ENCODE measurements at regions of chr3 and their contacts with region 1.

Region 1: GRCh38 chr3:188031121-188031520 is 122.8 kb upstream of the LPP start:
- DNase-seq: peak; percentile 58
- H3K4me3 ChIP-seq: no peak overlapping the region
- H3K27ac ChIP-seq: peak overlapping the region; percentile 36
- H3K4me1 ChIP-seq: peaks cover 33% of the 10 kb centered on the region
- CTCF ChIP-seq: peak; percentile 39; the same call in 1 of the 2 replicates

Region 2: DNA sequence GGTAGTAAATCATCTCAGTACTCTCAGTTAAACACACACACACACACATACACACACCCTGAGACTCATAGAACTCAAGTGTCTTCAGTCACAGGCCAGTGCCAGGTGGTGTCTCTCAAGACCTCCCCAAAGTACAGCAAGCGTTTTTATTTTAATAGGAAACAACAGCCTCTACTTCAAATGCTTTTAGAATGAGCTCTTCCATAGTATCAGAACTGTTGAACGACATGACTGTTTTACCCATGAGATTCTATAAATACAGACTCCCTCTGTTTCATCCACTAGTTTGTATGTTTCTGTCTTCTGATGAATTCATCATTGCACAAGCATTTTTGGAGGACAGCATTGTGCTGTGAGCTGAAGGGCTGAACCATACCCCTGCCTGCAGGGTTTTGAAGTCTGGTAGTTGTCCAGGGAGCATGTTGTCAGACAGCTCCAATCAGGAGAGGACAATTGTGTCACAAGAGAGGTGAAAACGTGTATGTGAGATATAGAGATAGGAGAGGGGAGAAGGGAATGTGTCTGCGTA is 84.9 kb before region 1 on chr3:
- CTCF ChIA-PET with region 1: no interaction called
- POLR2A ChIA-PET with region 1: no interaction called
- intact Hi-C with region 1: no loop called
- DNase-seq: peak; percentile 90
- H3K4me3 ChIP-seq: peak overlapping the region; percentile 69
- H3K27ac ChIP-seq: peak overlapping the region; percentile 99
- H3K4me1 ChIP-seq: peaks cover 100% of the 10 kb centered on the region
- CTCF ChIP-seq: peak; percentile 41; the same call in 1 of the 2 replicates

Region 3: GRCh38 chr3:188042466-188042865 is 11.3 kb after region 1 on chr3:
- CTCF ChIA-PET with region 1: interaction called, 3 read pairs
- POLR2A ChIA-PET with region 1: interaction called, 11 read pairs
- intact Hi-C with region 1: no loop called
- DNase-seq: no peak
- H3K4me3 ChIP-seq: no peak overlapping the region
- H3K27ac ChIP-seq: no peak overlapping the region
- H3K4me1 ChIP-seq: peaks cover 35% of the 10 kb centered on the region
- CTCF ChIP-seq: no peak

Region 4: GRCh38 chr3:188137051-188137450 is 105.9 kb after region 1 on chr3:
- CTCF ChIA-PET with region 1: no interaction called
- POLR2A ChIA-PET with region 1: no interaction called
- intact Hi-C with region 1: no loop called
- DNase-seq: peak; percentile 49
- H3K4me3 ChIP-seq: no peak overlapping the region
- H3K27ac ChIP-seq: no peak overlapping the region
- H3K4me1 ChIP-seq: peaks cover 14% of the 10 kb centered on the region
- CTCF ChIP-seq: no peak

Region 5: GRCh38 chr3:188664795-188665194 is 633.7 kb after region 1 on chr3:
- CTCF ChIA-PET with region 1: no interaction called
- POLR2A ChIA-PET with region 1: no interaction called
- intact Hi-C with region 1: no loop called
- DNase-seq: peak; percentile 56
- H3K4me3 ChIP-seq: no peak overlapping the region
- H3K27ac ChIP-seq: no peak overlapping the region
- H3K4me1 ChIP-seq: no peaks in the 10 kb centered on the region
- CTCF ChIP-seq: peak; percentile 72

Measured in OCI-LY7 (cell line).